Mammary epithelial cell (primary cell): ENCODE measurements at regions of chr11 and their contacts with region 1.

Region 1: DNA sequence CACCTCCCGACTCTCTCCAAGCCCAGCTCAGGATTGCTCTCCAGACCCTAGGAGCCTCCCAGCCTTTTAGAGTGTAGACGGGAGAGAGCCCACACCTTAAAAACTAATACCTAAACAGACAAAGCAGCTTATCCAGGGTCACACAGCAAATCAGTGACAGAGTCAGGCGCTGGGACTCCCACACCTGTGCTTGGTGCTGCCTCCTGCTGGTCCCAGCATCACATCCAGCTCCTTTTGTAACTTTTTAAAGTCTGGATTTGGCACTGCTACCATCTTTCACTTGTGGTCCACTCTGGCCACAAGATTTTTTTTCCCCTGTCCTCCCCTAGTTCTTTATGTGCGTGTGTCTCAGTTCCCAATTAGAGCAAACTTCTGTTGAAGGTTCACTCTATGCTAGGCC is 4.7 kb downstream of the ANO1 start:
- DNase-seq: no peak
- H3K4me3 ChIP-seq: no peak overlapping the region
- H3K27ac ChIP-seq: no peak overlapping the region
- H3K4me1 ChIP-seq: peaks cover 49% of the 10 kb centered on the region
- H3K27me3 ChIP-seq: no peaks in the 10 kb centered on the region
- CTCF ChIP-seq: peak; percentile 37 to 51

Region 2: GRCh38 chr11:69999721-70000120 is 83.1 kb before region 1 on chr11:
- CTCF ChIA-PET with region 1: no interaction called
- dilution Hi-C with region 1: loop called (anchors 5 kb)
- in situ Hi-C with region 1: no loop called
- intact Hi-C with region 1: no loop called
- DNase-seq: peak; percentile 75
- H3K4me3 ChIP-seq: no peak overlapping the region
- H3K27ac ChIP-seq: no peak overlapping the region
- H3K4me1 ChIP-seq: peaks cover 23% of the 10 kb centered on the region
- H3K27me3 ChIP-seq: no peaks in the 10 kb centered on the region
- CTCF ChIP-seq: no peak

Region 3: DNA sequence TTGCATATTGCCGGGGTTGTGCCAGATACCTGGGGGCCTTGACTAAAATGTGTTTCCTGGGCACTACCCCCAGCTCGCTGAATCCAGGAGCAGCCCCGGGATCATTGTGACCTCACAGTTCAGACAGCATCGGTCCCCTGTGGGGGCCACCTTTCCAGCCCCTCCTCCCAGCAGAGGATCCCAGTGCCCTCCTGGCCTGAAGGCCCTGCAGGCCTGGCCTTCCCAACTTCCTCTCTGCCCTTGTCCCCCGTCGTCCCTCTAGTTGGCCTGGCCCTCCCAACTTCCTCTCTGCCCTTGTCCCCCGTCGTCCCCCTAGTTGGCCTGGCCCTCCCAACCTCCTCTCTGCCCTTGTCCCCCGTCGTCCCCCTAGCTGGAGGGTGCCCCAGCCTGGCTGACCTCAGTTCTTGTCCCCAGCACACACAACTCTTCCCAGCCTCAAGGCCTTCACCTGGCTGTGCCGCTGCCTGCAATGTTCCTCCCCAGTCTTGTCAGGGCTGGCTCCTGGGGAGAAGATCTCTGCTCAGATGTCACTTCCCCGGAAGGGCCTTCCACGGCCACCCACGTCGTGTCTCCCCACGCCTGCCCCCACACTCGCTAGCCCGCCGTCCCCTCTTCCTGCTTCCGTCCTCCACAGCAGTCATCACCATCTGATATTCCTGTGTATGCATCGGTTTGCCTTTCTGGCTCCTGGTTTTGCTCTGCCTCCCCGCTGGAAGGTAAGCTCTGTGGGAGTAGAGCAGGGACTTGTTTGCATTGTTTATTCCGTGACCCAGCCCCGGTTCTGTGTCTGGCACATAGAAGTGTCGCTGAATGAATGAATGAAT is 17.3 kb before region 1 on chr11:
- CTCF ChIA-PET with region 1: no interaction called
- dilution Hi-C with region 1: no loop called
- in situ Hi-C with region 1: no loop called
- intact Hi-C with region 1: loop called (anchors 2 kb)
- DNase-seq: no peak
- H3K4me3 ChIP-seq: no peak overlapping the region
- H3K27ac ChIP-seq: peak overlapping the region; percentile 87
- H3K4me1 ChIP-seq: peaks cover 60% of the 10 kb centered on the region
- H3K27me3 ChIP-seq: no peaks in the 10 kb centered on the region
- CTCF ChIP-seq: no peak

Region 4: DNA sequence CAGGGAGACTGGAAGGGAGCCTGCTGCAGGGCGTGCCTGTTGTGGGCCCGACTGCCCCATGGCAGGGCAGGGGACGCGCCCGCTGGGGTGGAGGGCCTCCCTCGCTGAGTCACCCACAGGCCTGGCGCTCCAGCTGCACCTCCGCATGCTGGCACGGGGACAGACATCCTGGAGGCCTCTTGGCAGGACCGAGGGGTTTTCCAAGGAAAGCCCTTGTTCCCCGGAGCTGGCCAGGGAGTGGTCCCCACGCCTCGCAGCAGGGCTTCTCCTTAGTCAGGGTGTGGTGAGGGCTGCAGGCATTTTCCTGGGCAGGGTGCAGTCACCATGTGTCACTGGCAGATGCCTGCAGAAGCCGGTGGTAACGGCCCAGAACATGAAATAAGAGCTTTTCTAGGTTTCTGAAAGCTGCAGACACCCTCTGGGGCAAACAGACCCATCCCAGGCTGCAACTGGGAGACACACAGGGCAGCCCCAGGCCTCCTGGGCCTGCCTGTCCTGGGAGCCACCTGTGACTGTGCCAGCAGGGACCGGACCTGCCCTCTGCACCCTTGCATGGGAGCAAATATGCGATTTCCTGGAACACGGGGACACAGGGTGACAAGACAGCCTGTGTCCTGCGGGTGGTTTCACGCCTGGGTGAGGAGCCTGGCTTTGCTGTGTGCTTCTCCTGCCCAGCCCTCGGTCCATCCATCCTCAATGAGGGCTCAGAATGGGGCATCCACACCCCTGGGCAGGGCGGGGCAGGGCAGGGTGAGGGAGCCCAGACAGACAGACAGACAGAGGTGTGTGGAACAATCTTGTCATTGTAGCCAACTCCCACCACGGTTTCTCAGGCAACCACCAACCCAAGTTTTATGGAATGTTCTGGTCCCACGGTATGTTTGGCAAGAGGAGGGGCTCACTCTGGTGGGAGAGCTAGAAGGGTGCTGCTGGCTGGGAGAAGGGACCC is 77.1 kb after region 1 on chr11:
- CTCF ChIA-PET with region 1: no interaction called
- dilution Hi-C with region 1: no loop called
- in situ Hi-C with region 1: no loop called
- intact Hi-C with region 1: loop called (anchors 1 kb)
- DNase-seq: peak; percentile 99
- H3K4me3 ChIP-seq: no peak overlapping the region
- H3K27ac ChIP-seq: peak overlapping the region; percentile 86
- H3K4me1 ChIP-seq: peaks cover 56% of the 10 kb centered on the region
- H3K27me3 ChIP-seq: no peaks in the 10 kb centered on the region
- CTCF ChIP-seq: no peak